ENCODE measurements at regions of chr6 and their contacts with region 1.

Region 1: DNA sequence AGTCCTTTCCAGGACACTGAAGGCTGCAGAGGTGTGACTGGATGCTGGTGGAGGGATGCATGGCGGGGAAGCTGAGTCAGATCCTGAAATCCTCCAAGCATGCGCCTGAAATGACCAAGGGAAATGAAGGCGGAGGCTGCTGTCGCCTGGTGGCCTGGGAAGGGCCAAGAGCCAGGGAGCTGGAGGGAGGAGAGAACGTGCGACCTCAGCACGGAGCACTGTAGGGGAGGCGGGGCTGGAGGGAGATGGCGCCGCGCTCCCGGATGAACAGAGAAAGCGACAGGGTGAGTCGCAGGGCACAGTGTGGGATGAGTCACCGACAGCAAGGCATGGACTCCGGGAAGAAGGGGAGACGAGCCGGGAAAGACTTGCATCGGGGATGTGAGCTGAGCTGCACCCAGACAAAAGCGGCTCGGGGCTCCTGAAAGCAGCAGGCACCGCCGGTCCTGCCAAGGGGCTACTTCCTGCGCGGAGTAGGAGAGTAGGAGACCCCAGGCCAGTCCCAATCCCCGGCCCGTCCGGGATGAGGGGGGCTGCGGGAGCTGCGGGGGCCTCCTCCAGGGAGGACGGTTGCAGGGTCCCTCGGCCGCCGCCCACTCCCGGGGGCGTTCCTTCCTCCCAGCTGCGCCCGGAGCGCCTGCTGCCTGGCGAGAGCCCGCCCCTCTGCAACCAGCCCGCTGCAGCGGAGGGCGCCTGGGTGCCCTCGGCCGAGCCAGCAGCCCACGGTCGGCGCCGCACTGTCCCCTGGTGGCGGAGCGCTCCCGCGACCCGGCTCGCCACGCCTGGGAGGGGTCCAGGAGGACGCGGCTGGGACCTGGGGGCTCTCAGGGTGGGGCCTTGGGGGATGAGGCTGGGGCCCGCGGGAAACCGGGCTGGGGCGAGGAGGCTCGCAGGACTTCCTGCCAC is 11.0 kb upstream of the NQO2 start:
- DNase-seq: peak; percentile 87
- H3K4me3 Mint-ChIP-seq: peak overlapping the region; percentile 84
- H3K27ac Mint-ChIP-seq: peak overlapping the region; percentile 98
- H3K4me1 Mint-ChIP-seq: peaks cover 20% of the 10 kb centered on the region
- H3K27me3 Mint-ChIP-seq: no peaks in the 10 kb centered on the region

Region 2: GRCh38 chr6:2450335-2450945 is 538.2 kb before region 1 on chr6:
- CTCF ChIA-PET with region 1: no interaction called
- POLR2A ChIA-PET with region 1: no interaction called
- intact Hi-C with region 1: no loop called
- DNase-seq: no peak
- H3K4me3 Mint-ChIP-seq: no peak overlapping the region
- H3K27ac Mint-ChIP-seq: no peak overlapping the region
- H3K4me1 Mint-ChIP-seq: peaks cover 3% of the 10 kb centered on the region
- H3K27me3 Mint-ChIP-seq: peaks cover 8% of the 10 kb centered on the region

Region 3: GRCh38 chr6:2634139-2634964 is 354.3 kb before region 1 on chr6:
- CTCF ChIA-PET with region 1: no interaction called
- POLR2A ChIA-PET with region 1: no interaction called
- intact Hi-C with region 1: loop called (anchors 10 kb)
- DNase-seq: peak; percentile 86
- H3K4me3 Mint-ChIP-seq: peak overlapping the region; percentile 57
- H3K27ac Mint-ChIP-seq: no peak overlapping the region
- H3K4me1 Mint-ChIP-seq: peaks cover 5% of the 10 kb centered on the region
- H3K27me3 Mint-ChIP-seq: peaks cover 27% of the 10 kb centered on the region

Region 4: DNA sequence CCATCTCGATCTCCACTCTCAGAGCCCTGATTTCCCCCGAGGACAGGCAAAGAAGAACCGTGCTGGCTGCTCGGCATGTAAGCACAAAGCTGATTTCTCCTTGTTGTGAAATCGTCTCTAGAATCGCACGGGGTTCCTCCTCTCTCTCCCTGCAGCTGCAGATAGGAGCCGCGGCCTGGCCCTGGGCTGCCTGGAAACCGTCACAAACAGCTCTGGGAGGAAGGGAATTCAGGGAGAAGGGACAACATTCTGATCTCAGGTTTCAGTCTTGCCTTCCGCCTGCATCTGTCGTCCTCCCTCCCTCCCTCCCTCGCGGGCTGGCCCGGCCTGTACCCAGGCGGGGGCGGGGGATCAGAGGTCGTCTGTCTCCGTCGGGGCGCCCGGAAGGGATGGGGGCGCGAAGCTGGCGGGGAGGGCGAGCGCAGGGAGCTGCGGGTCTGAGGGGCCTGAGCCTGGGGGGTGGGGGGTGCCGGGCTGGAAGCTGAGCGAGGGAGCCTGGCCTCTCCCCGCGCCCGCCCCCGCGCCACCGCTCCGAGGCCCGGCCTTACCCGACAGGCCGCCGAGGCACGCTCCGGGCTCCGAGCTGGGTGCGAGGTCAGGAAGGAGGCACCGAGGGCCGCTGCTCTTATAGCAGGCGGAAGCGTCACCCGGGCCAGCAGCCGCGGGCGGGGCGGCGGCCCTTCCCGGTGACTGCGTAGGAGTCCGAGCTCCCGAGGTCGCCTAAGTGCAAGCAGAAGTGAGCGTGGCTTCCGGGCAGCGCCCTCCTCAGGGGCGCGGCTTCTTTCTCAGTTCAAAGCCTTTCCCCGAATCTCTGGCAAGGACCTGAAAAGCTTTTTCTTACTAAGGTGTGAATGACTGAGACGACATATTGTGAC is 147.2 kb before region 1 on chr6 and contains the start of gene SERPINB1:
- CTCF ChIA-PET with region 1: interaction called, 84 read pairs
- POLR2A ChIA-PET with region 1: interaction called, 44 read pairs
- intact Hi-C with region 1: loop called (anchors 1 kb)
- DNase-seq: peak; percentile 96
- H3K4me3 Mint-ChIP-seq: peak within 1 kb of the TSS; percentile 86
- H3K27ac Mint-ChIP-seq: peak within 1 kb of the TSS; percentile 93
- H3K4me1 Mint-ChIP-seq: peaks cover 67% of the 10 kb centered on the region
- H3K27me3 Mint-ChIP-seq: no peaks in the 10 kb centered on the region
- total RNA-seq, gene SERPINB1: 164 to 169 TPM

Region 5: GRCh38 chr6:2900821-2901644 is 87.6 kb before region 1 on chr6:
- CTCF ChIA-PET with region 1: interaction called, 10 read pairs
- POLR2A ChIA-PET with region 1: interaction called, 4 read pairs
- intact Hi-C with region 1: no loop called
- DNase-seq: no peak
- H3K4me3 Mint-ChIP-seq: peak overlapping the region; percentile 99
- H3K27ac Mint-ChIP-seq: peak overlapping the region; percentile 95
- H3K4me1 Mint-ChIP-seq: peaks cover 41% of the 10 kb centered on the region
- H3K27me3 Mint-ChIP-seq: no peaks in the 10 kb centered on the region

Region 6: GRCh38 chr6:2952557-2953095 is 36.1 kb before region 1 on chr6:
- CTCF ChIA-PET with region 1: interaction called, 9 read pairs
- POLR2A ChIA-PET with region 1: interaction called, 4 read pairs
- intact Hi-C with region 1: loop called (anchors 1 kb)
- DNase-seq: peak; percentile 65
- H3K4me3 Mint-ChIP-seq: no peak overlapping the region
- H3K27ac Mint-ChIP-seq: no peak overlapping the region
- H3K4me1 Mint-ChIP-seq: no peaks in the 10 kb centered on the region
- H3K27me3 Mint-ChIP-seq: no peaks in the 10 kb centered on the region

Region 7: GRCh38 chr6:2999618-3000557 is 11.2 kb after region 1 on chr6 and contains the start of gene NQO2:
- CTCF ChIA-PET with region 1: interaction called, 20 read pairs
- POLR2A ChIA-PET with region 1: interaction called, 25 read pairs
- intact Hi-C with region 1: loop called (anchors 1 kb)
- DNase-seq: peak; percentile 94
- H3K4me3 Mint-ChIP-seq: peak within 1 kb of the TSS; percentile 88
- H3K27ac Mint-ChIP-seq: peak within 1 kb of the TSS; percentile 88
- H3K4me1 Mint-ChIP-seq: peaks cover 30% of the 10 kb centered on the region
- H3K27me3 Mint-ChIP-seq: no peaks in the 10 kb centered on the region
- total RNA-seq, gene NQO2: 36.1 to 38.9 TPM

Region 8: GRCh38 chr6:3118353-3119039 is 129.8 kb after region 1 on chr6 and contains the start of gene BPHL:
- CTCF ChIA-PET with region 1: interaction called, 4 read pairs
- POLR2A ChIA-PET with region 1: interaction called, 3 read pairs
- intact Hi-C with region 1: loop called (anchors 1 kb)
- DNase-seq: peak; percentile 99
- H3K4me3 Mint-ChIP-seq: peak within 1 kb of the TSS; percentile 78
- H3K27ac Mint-ChIP-seq: peak within 1 kb of the TSS; percentile 62
- H3K4me1 Mint-ChIP-seq: peaks cover 14% of the 10 kb centered on the region
- H3K27me3 Mint-ChIP-seq: no peaks in the 10 kb centered on the region
- total RNA-seq, gene BPHL: 10.1 to 11.4 TPM